Left colon (tissue), 2 donors: ENCODE measurements at regions of chr9 and their contacts with region 1.

Region 1: GRCh38 chr9:89602978-89603766 is 1.6 kb upstream of the GADD45G start:
- DNase-seq: peak; percentile 85 to 95
- ATAC-seq: peak; percentile 37

Region 2: GRCh38 chr9:89999534-90000370 is 396.6 kb after region 1 on chr9:
- intact Hi-C with region 1: loop called in 1 of 2 experiments (anchors 10 kb)
- DNase-seq: peak; percentile 84 to 89
- ATAC-seq: peak; percentile 89

Region 3: DNA sequence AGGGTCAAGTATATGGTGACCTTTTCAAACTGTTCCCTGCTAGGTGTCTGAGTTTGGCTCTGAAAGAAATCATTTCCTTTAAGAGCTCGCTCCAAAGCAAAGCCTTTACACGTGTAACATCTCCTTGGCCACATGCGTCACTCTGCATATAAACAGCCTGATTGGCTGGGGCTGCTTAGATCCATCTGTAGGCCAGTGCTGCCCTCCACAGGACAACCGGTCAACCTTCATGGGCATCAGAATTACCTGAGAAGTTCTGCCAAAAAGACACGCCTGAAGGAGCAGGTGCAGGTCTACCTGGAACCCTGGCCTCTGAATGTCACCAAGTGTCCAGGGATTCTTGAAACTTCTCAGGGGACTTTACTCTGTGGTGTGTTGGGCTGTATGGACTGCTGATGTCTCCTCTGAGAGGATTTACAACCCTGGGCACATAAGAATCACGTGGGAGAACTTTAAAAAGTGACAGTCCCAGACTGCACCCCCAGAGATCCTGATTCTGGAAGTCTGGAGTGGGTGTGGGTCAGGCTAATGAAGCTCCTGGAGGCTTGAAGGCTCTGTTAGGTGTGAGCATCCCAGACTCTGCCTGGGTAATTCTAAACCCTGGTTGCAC is 499.2 kb after region 1 on chr9:
- intact Hi-C with region 1: loop called (anchors 2 to 5 kb)
- DNase-seq: peak; percentile 90 to 91
- ATAC-seq: peak; percentile 97